ENCODE measurements at regions of chr2 and their contacts with region 1.

Region 1: GRCh38 chr2:166424841-166425240 is 49.1 kb upstream of the SCN9A start:
- DNase-seq: no peak
- ATAC-seq: no peak
- H3K4me3 ChIP-seq: no peak overlapping the region
- H3K27ac ChIP-seq: no peak overlapping the region
- H3K4me1 ChIP-seq: no peaks in the 10 kb centered on the region
- H3K27me3 ChIP-seq: no peaks in the 10 kb centered on the region
- CTCF ChIP-seq: no peak
- POLR2A ChIP-seq: no peak
- RAD21 ChIP-seq: no peak

Region 2: DNA sequence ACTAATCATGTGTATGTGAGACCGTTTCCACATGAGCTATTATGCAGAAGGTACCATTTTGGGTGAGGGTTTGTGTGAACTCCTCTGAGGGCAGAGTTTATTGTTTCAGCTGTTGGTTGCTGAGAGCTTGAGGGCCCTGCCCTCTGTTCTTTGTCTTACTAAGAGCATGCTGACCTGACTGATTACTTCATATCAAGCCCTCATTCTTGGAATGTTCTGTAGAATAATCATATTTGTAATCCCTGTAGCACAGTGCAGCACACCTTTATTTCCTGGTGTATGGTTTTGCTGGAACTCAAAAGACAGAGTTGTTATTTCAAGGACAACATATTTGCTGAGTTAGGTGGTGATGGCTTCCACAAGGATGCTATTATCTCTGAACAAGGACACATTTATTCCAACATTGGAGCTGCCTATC is 749.3 kb before region 1 on chr2:
- CTCF ChIA-PET with region 1: no interaction called
- POLR2A ChIA-PET with region 1: no interaction called
- dilution Hi-C with region 1: no loop called
- in situ Hi-C with region 1: no loop called
- intact Hi-C with region 1: no loop called
- DNase-seq: no peak
- ATAC-seq: no peak
- H3K4me3 ChIP-seq: no peak overlapping the region
- H3K27ac ChIP-seq: no peak overlapping the region
- H3K4me1 ChIP-seq: no peaks in the 10 kb centered on the region
- H3K27me3 ChIP-seq: no peaks in the 10 kb centered on the region
- CTCF ChIP-seq: no peak
- POLR2A ChIP-seq: no peak
- RAD21 ChIP-seq: no peak

Region 3: GRCh38 chr2:165953655-165954606 is 470.9 kb before region 1 on chr2 and contains the start of gene TTC21B:
- CTCF ChIA-PET with region 1: no interaction called
- POLR2A ChIA-PET with region 1: no interaction called
- dilution Hi-C with region 1: no loop called
- in situ Hi-C with region 1: loop called (anchors 25 kb)
- intact Hi-C with region 1: loop called (anchors 5 kb)
- DNase-seq: peak; percentile 95
- ATAC-seq: peak; percentile 99
- H3K4me3 ChIP-seq: peak within 1 kb of the TSS; percentile 64
- H3K27ac ChIP-seq: peak within 1 kb of the TSS; percentile 45
- H3K4me1 ChIP-seq: no peaks in the 10 kb centered on the region
- H3K27me3 ChIP-seq: no peaks in the 10 kb centered on the region
- CTCF ChIP-seq: peak; percentile 84
- POLR2A ChIP-seq: peak; percentile 81
- RAD21 ChIP-seq: peak; percentile 54
- total RNA-seq, gene TTC21B: 17.2 and 23.1 TPM in 2 replicates

Region 4: GRCh38 chr2:166516712-166517303 is 92.0 kb after region 1 on chr2:
- CTCF ChIA-PET with region 1: interaction called, 3 read pairs
- POLR2A ChIA-PET with region 1: no interaction called
- dilution Hi-C with region 1: no loop called
- in situ Hi-C with region 1: no loop called
- intact Hi-C with region 1: loop called (anchors 5 kb)
- DNase-seq: peak; percentile 40
- ATAC-seq: peak; percentile 60; the same call in 1 of the 2 replicates
- H3K4me3 ChIP-seq: no peak overlapping the region
- H3K27ac ChIP-seq: no peak overlapping the region
- H3K4me1 ChIP-seq: peaks cover 5% of the 10 kb centered on the region
- H3K27me3 ChIP-seq: no peaks in the 10 kb centered on the region
- CTCF ChIP-seq: peak; percentile 60
- POLR2A ChIP-seq: no peak
- RAD21 ChIP-seq: peak; percentile 55

Region 5: GRCh38 chr2:167310442-167310841 is 885.6 kb after region 1 on chr2:
- CTCF ChIA-PET with region 1: no interaction called
- POLR2A ChIA-PET with region 1: no interaction called
- dilution Hi-C with region 1: no loop called
- in situ Hi-C with region 1: no loop called
- intact Hi-C with region 1: no loop called
- DNase-seq: no peak
- ATAC-seq: no peak
- H3K4me3 ChIP-seq: no peak overlapping the region
- H3K27ac ChIP-seq: no peak overlapping the region
- H3K4me1 ChIP-seq: no peaks in the 10 kb centered on the region
- H3K27me3 ChIP-seq: no peaks in the 10 kb centered on the region
- CTCF ChIP-seq: no peak
- POLR2A ChIP-seq: no peak
- RAD21 ChIP-seq: no peak